ENCODE measurements at regions of chr12 and their contacts with region 1.

Region 1: DNA sequence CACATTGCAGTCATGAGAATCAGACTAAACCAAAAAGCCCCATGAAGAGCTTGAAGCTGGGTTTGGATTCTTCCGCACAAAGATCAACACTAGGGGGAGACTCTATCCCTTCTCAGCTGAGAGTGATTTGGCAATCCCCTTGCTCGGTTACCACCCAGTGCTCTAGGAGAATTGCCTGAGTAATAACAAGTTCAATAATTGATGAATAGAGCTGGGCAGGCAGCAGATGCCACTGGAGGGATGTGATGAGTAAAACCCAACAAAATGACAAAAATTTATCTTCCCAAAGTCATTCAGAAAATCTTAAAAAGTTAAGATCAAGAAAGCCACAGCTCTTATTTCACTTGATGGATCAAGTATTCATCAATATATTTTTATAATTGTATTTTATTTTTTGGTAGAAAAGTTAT is 185.6 kb upstream of the ARID2 start:
- DNase-seq: peak; percentile 79
- H3K4me3 ChIP-seq: no peak overlapping the region
- H3K27ac ChIP-seq: no peak overlapping the region
- H3K4me1 ChIP-seq: no peaks in the 10 kb centered on the region
- H3K27me3 ChIP-seq: peaks cover 8 to 9% of the 10 kb centered on the region in 2 experiments
- CTCF ChIP-seq: peak; percentile 78 to 82
- POLR2A ChIP-seq: no peak

Region 2: DNA sequence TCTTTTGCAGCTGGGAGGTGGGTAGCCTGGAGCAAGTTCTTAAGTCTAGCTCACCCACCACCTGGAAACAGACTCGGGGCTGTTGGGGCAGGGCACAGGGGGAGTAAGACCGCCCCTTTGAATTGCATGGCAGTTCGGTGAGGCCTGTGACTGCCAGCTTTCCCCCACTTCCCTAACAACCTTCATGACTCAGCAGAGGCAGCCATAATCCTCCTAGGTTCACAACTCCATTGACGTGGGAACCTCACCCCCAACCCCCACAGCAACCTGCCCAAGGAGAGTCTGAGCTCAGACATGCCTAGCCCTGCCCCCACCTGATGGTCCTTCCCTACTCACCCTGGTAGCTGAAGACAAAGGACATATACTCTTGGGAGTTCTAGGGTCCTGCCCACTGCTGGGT is 755.2 kb before region 1 on chr12:
- CTCF ChIA-PET with region 1: no interaction called
- POLR2A ChIA-PET with region 1: no interaction called
- dilution Hi-C with region 1: no loop called
- intact Hi-C with region 1: no loop called
- DNase-seq: no peak
- H3K4me3 ChIP-seq: no peak overlapping the region
- H3K27ac ChIP-seq: no peak overlapping the region
- H3K4me1 ChIP-seq: no peaks in the 10 kb centered on the region
- H3K27me3 ChIP-seq: no peaks in the 10 kb centered on the region
- CTCF ChIP-seq: no peak
- POLR2A ChIP-seq: no peak

Region 3: GRCh38 chr12:45170456-45171042 is 373.4 kb before region 1 on chr12:
- CTCF ChIA-PET with region 1: interaction called, 21 read pairs
- POLR2A ChIA-PET with region 1: no interaction called
- dilution Hi-C with region 1: no loop called
- intact Hi-C with region 1: loop called (anchors 5 kb)
- DNase-seq: peak; percentile 74
- H3K4me3 ChIP-seq: no peak overlapping the region
- H3K27ac ChIP-seq: no peak overlapping the region
- H3K4me1 ChIP-seq: no peaks in the 10 kb centered on the region
- H3K27me3 ChIP-seq: peaks cover 0 to 5% of the 10 kb centered on the region in 2 experiments
- CTCF ChIP-seq: peak; percentile 86 to 90
- POLR2A ChIP-seq: no peak

Region 4: GRCh38 chr12:45532113-45532512 is 11.8 kb before region 1 on chr12:
- CTCF ChIA-PET with region 1: interaction called, 31 read pairs
- POLR2A ChIA-PET with region 1: no interaction called
- dilution Hi-C with region 1: no loop called
- intact Hi-C with region 1: no loop called
- DNase-seq: no peak
- H3K4me3 ChIP-seq: no peak overlapping the region
- H3K27ac ChIP-seq: no peak overlapping the region
- H3K4me1 ChIP-seq: no peaks in the 10 kb centered on the region
- H3K27me3 ChIP-seq: peaks cover 4 to 13% of the 10 kb centered on the region in 2 experiments
- CTCF ChIP-seq: no peak
- POLR2A ChIP-seq: no peak

Region 5: DNA sequence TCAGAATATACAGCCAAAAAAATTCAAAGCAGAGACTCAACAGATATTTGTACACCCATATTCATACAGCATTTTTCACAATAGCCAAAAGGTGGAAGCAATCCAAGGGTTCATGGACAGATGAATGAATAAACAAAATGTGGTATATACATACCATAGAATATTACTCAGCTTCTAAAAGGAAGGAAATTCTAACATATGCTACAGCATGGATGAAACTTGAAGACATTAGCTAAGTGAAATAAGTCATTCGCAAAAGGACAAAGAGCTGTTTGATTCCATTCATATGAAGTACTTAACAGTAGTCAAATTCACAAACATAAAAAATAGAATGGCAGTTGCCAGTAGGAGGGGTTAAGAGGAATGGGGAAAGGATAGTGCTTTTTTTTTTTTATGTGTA is 93.8 kb after region 1 on chr12:
- CTCF ChIA-PET with region 1: interaction called, 11 read pairs
- POLR2A ChIA-PET with region 1: no interaction called
- dilution Hi-C with region 1: no loop called
- intact Hi-C with region 1: no loop called
- DNase-seq: peak; percentile 74
- H3K4me3 ChIP-seq: no peak overlapping the region
- H3K27ac ChIP-seq: peak overlapping the region; percentile 50
- H3K4me1 ChIP-seq: peaks cover 17% of the 10 kb centered on the region
- H3K27me3 ChIP-seq: peaks cover 0 to 2% of the 10 kb centered on the region in 2 experiments
- CTCF ChIP-seq: no peak
- POLR2A ChIP-seq: no peak

Region 6: GRCh38 chr12:45695015-45695414 is 151.1 kb after region 1 on chr12:
- CTCF ChIA-PET with region 1: interaction called, 13 read pairs
- POLR2A ChIA-PET with region 1: no interaction called
- dilution Hi-C with region 1: no loop called
- intact Hi-C with region 1: no loop called
- DNase-seq: no peak
- H3K4me3 ChIP-seq: no peak overlapping the region
- H3K27ac ChIP-seq: no peak overlapping the region
- H3K4me1 ChIP-seq: no peaks in the 10 kb centered on the region
- H3K27me3 ChIP-seq: peaks cover 0 to 5% of the 10 kb centered on the region in 2 experiments
- CTCF ChIP-seq: no peak
- POLR2A ChIP-seq: no peak

Region 7: GRCh38 chr12:45728630-45729232 is 184.8 kb after region 1 on chr12:
- CTCF ChIA-PET with region 1: interaction called, 337 read pairs
- POLR2A ChIA-PET with region 1: interaction called, 6 read pairs
- dilution Hi-C with region 1: no loop called
- intact Hi-C with region 1: loop called (anchors 1 kb)
- DNase-seq: peak; percentile 97
- H3K4me3 ChIP-seq: peak overlapping the region; percentile 28 to 71 (median 60)
- H3K27ac ChIP-seq: peak overlapping the region; percentile 87
- H3K4me1 ChIP-seq: peaks cover 32% of the 10 kb centered on the region
- H3K27me3 ChIP-seq: no peaks in the 10 kb centered on the region
- CTCF ChIP-seq: peak; percentile 93 to 96
- POLR2A ChIP-seq: peak; percentile 84

Region 8: GRCh38 chr12:45762185-45763110 is 218.5 kb after region 1 on chr12:
- CTCF ChIA-PET with region 1: interaction called, 16 read pairs
- POLR2A ChIA-PET with region 1: no interaction called
- dilution Hi-C with region 1: no loop called
- intact Hi-C with region 1: no loop called
- DNase-seq: peak; percentile 70
- H3K4me3 ChIP-seq: no peak overlapping the region
- H3K27ac ChIP-seq: no peak overlapping the region
- H3K4me1 ChIP-seq: no peaks in the 10 kb centered on the region
- H3K27me3 ChIP-seq: no peaks in the 10 kb centered on the region
- CTCF ChIP-seq: peak; percentile 47 to 56
- POLR2A ChIP-seq: no peak

Measured in endothelial cell of umbilical vein (primary cell).